ENCODE measurements at regions of chr19 and their contacts with region 1.

Region 1: GRCh38 chr19:55385740-55386529 is at the start of gene RPL28:
- DNase-seq: peak; percentile 85 to 99 (median 91)
- ATAC-seq: peak; percentile 80
- H3K4me3 ChIP-seq: peak within 1 kb of the TSS; percentile 77
- H3K27ac ChIP-seq: peak within 1 kb of the TSS; percentile 97
- H3K4me1 ChIP-seq: peaks cover 54 to 66% of the 10 kb centered on the region in 2 experiments
- H3K27me3 ChIP-seq: no peaks in the 10 kb centered on the region
- CTCF ChIP-seq: no peak
- EP300 ChIP-seq: peak; percentile 3; the same call in 1 of the 2 replicates
- POLR2A ChIP-seq: peak; percentile 99
- RAD21 ChIP-seq: no peak
- polyA plus RNA-seq, gene RPL28: 257 to 287 TPM

Region 2: GRCh38 chr19:55301459-55302317 is 84.2 kb before region 1 on chr19:
- CTCF ChIA-PET with region 1: no interaction called
- POLR2A ChIA-PET with region 1: interaction called, 3 read pairs
- in situ Hi-C with region 1: no loop called
- intact Hi-C with region 1: loop called (anchors 5 kb)
- DNase-seq: peak; percentile 94 to 99 (median 99)
- ATAC-seq: peak; percentile 83
- H3K4me3 ChIP-seq: peak overlapping the region; percentile 41
- H3K27ac ChIP-seq: peak overlapping the region; percentile 50
- H3K4me1 ChIP-seq: peaks cover 17 to 57% of the 10 kb centered on the region in 2 experiments; a peak in 4 of 5 replicates
- H3K27me3 ChIP-seq: no peaks in the 10 kb centered on the region
- CTCF ChIP-seq: peak; percentile 86 to 93 (median 90)
- EP300 ChIP-seq: no peak
- POLR2A ChIP-seq: peak; percentile 61
- RAD21 ChIP-seq: peak; percentile 43 to 67

Region 3: GRCh38 chr19:55372316-55373081 is 13.4 kb before region 1 on chr19:
- CTCF ChIA-PET with region 1: no interaction called
- POLR2A ChIA-PET with region 1: interaction called, 12 read pairs
- in situ Hi-C with region 1: no loop called
- intact Hi-C with region 1: no loop called
- DNase-seq: no peak
- ATAC-seq: no peak
- H3K4me3 ChIP-seq: no peak overlapping the region
- H3K27ac ChIP-seq: no peak overlapping the region
- H3K4me1 ChIP-seq: peaks cover 10 to 77% of the 10 kb centered on the region in 2 experiments; a peak in 4 of 5 replicates
- H3K27me3 ChIP-seq: peaks cover 11% of the 10 kb centered on the region in 2 experiments; a peak in 4 of 5 replicates
- CTCF ChIP-seq: no peak
- EP300 ChIP-seq: no peak
- POLR2A ChIP-seq: no peak
- RAD21 ChIP-seq: no peak

Region 4: DNA sequence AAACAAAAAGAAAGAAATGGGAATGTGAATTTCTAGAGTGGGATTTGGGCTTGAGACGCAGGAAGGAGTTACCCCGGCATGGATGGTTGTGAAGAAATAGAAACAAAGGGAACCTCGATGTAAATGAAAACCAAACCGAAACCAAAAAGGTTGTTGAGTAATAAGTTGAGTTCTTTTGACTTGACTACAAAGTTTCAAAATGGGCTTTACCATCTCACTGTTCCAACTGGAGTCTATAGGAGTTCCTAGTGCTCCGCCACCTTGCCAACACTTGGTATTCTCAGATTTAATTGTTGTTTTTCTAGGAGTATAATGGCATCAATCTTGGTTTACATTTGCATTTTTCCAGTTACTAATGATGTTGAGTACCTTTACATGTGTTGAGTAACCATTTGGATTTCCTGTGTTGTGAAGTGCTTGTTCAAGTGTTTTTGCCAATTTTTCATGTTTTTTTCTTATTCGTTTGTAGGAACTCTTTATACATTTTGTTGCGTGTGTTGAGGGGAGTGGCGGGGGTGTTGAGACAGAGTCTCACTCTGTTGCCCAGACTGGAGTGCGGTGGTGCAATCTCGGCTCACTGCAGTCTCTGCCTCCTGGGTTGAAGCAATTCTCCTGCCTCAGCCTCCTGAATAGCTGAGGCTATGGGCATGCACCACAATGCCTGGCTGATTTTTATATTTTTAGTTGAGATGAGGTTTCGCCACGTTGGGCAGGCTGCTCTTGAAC is 12.4 kb after region 1 on chr19:
- CTCF ChIA-PET with region 1: no interaction called
- POLR2A ChIA-PET with region 1: interaction called, 195 read pairs
- in situ Hi-C with region 1: no loop called
- intact Hi-C with region 1: no loop called
- DNase-seq: no peak
- ATAC-seq: no peak
- H3K4me3 ChIP-seq: no peak overlapping the region
- H3K27ac ChIP-seq: no peak overlapping the region
- H3K4me1 ChIP-seq: peaks cover 0 to 12% of the 10 kb centered on the region in 2 experiments; a peak in 4 of 5 replicates
- H3K27me3 ChIP-seq: no peaks in the 10 kb centered on the region
- CTCF ChIP-seq: no peak
- EP300 ChIP-seq: no peak
- POLR2A ChIP-seq: no peak
- RAD21 ChIP-seq: no peak

Region 5: DNA sequence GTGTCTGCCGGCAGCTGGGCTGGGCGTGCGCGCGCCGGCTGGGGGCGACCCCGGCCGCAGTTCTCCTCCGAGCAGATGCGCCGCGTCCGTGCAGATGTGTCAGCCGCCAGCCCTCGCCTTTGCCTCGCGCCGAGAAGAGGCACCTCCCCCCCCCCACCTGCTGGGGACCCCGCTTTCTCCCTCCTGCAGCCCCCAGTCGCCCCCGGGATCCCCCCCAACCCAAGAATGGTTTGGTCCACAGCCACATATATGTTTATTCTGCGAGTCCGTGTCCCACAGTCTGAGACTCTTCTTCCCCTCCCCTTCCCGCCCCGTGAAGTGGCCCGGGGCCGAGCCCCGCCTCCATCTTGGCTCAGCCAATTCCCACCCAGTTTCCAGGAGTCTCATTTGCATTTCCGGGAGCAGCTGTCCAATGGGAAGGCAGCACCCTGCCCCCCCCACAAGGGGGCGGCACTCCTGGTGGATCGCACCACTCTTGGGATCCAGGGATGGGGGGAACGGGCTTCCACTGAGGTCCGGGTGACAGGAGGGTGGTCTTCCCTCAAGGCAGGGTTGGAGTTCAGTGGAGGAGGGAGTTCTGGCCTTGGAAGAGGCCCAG is 66.9 kb after region 1 on chr19:
- CTCF ChIA-PET with region 1: no interaction called
- POLR2A ChIA-PET with region 1: no interaction called
- in situ Hi-C with region 1: no loop called
- intact Hi-C with region 1: loop called (anchors 5 kb)
- DNase-seq: peak; percentile 88 to 99 (median 94)
- ATAC-seq: peak; percentile 98
- H3K4me3 ChIP-seq: peak overlapping the region; percentile 28
- H3K27ac ChIP-seq: no peak overlapping the region
- H3K4me1 ChIP-seq: peaks cover 0 to 70% of the 10 kb centered on the region in 2 experiments
- H3K27me3 ChIP-seq: peaks cover 0 to 7% of the 10 kb centered on the region in 2 experiments; a peak in 4 of 5 replicates
- CTCF ChIP-seq: no peak
- EP300 ChIP-seq: no peak
- POLR2A ChIP-seq: no peak; the same call in 1 of the 2 replicates
- RAD21 ChIP-seq: no peak

Region 6: DNA sequence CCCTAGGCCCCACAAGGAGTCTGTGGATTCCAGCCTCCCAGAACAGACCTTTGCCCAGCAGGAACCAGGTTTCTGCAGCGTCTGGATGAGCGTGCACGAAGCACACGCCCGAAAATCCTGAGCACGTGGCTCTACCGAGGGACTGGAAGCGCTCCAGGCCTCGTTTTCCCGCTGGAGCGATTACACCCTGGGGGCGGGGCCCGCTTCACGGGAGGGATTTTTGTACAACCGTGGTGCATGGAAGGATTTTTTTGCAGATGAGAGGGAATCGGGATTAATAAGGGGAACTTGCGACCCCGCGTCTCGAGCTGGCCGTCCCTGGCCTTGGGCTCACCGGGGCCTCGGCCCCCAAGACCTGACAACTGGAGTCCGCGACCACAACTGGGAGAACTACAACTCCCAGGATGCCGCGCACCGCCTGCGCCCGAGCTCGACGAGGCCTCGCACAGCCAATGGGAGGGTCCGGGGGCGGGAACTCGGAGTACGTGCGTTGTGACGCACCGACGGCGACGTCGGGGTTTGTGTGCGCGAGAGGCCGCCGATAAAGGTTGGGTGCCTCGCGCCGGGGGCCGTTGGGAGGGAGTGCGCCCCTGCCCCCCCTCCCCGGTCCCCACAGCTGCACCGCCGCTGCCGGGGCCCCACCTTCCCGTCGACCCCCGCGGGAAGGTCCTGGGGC is 90.3 kb after region 1 on chr19 and contains the start of gene ZNF628:
- CTCF ChIA-PET with region 1: no interaction called
- POLR2A ChIA-PET with region 1: no interaction called
- in situ Hi-C with region 1: no loop called
- intact Hi-C with region 1: no loop called
- DNase-seq: peak; percentile 92 to 100 (median 94)
- ATAC-seq: peak; percentile 95
- H3K4me3 ChIP-seq: peak within 1 kb of the TSS; percentile 61
- H3K27ac ChIP-seq: peak within 1 kb of the TSS; percentile 77
- H3K4me1 ChIP-seq: peaks cover 27 to 57% of the 10 kb centered on the region in 2 experiments
- H3K27me3 ChIP-seq: no peaks in the 10 kb centered on the region
- CTCF ChIP-seq: peak in 1 of 3 experiments; percentile 11; a peak in 1 of 6 replicates
- EP300 ChIP-seq: no peak
- POLR2A ChIP-seq: peak; percentile 70
- RAD21 ChIP-seq: no peak
- polyA plus RNA-seq, gene ZNF628: not detected

Region 7: DNA sequence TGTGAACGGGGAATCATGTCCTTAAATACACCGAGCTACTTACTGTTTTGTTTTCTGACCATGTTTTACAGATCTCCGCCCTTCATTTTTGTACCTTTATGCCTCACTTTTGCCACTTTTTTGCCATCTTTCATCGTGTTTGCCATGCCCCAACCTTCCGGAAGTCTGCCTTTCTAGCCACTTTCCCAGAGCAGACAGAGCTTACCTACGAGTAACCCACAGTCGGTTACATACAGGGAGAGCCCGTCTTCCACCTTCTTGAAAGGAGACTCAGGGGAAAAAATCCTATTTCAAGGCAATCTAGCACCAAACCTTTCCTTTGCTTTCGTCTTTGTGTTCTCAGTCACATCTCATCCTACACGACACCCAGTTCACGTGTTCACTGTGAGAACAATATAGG is 409.1 kb after region 1 on chr19:
- CTCF ChIA-PET with region 1: no interaction called
- POLR2A ChIA-PET with region 1: no interaction called
- in situ Hi-C with region 1: no loop called
- intact Hi-C with region 1: no loop called
- DNase-seq: no peak
- ATAC-seq: no peak
- H3K4me3 ChIP-seq: no peak overlapping the region
- H3K27ac ChIP-seq: no peak overlapping the region
- H3K4me1 ChIP-seq: no peaks in the 10 kb centered on the region
- H3K27me3 ChIP-seq: peaks cover 22 to 27% of the 10 kb centered on the region in 2 experiments
- CTCF ChIP-seq: no peak
- EP300 ChIP-seq: no peak
- POLR2A ChIP-seq: no peak
- RAD21 ChIP-seq: no peak

Measured in K562 (cell line).